ENCODE measurements at regions of chr6 and their contacts with region 1.

Region 1: GRCh38 chr6:15823838-15824414 is 161.1 kb upstream of the DTNBP1 start:
- DNase-seq: no peak
- ATAC-seq: no peak
- H3K4me3 ChIP-seq: no peak overlapping the region
- H3K27ac ChIP-seq: no peak overlapping the region
- H3K4me1 ChIP-seq: peaks cover 7 to 10% of the 10 kb centered on the region in 2 experiments; a peak in 3 of 5 replicates
- H3K27me3 ChIP-seq: peaks cover 0 to 5% of the 10 kb centered on the region in 2 experiments; a peak in 1 of 5 replicates
- CTCF ChIP-seq: no peak
- EP300 ChIP-seq: no peak
- POLR2A ChIP-seq: no peak
- RAD21 ChIP-seq: no peak

Region 2: DNA sequence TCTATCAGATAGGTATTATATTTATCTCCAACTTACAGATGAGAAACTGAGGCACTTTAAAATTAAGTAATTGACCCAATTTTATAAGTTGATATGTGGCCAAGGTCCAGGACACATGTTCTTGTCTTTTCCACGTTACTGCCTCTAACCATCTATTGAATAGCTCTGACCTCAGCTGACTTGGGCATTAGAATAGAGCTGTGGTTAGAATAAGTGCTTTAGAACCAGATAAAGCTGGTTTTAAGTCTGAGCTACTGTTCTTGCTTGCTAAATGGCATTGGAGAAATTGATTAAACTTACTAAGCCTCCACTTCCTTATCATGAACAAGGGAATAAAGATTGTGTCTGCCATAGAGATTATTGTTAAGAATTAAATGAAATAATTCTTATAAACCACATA is 13.3 kb before region 1 on chr6:
- CTCF ChIA-PET with region 1: no interaction called
- POLR2A ChIA-PET with region 1: interaction called, 10 read pairs
- in situ Hi-C with region 1: no loop called
- intact Hi-C with region 1: no loop called
- DNase-seq: no peak
- ATAC-seq: no peak
- H3K4me3 ChIP-seq: no peak overlapping the region
- H3K27ac ChIP-seq: no peak overlapping the region
- H3K4me1 ChIP-seq: peaks cover 0 to 3% of the 10 kb centered on the region in 2 experiments; a peak in 1 of 5 replicates
- H3K27me3 ChIP-seq: no peaks in the 10 kb centered on the region
- CTCF ChIP-seq: no peak
- EP300 ChIP-seq: no peak
- POLR2A ChIP-seq: no peak
- RAD21 ChIP-seq: no peak

Region 3: DNA sequence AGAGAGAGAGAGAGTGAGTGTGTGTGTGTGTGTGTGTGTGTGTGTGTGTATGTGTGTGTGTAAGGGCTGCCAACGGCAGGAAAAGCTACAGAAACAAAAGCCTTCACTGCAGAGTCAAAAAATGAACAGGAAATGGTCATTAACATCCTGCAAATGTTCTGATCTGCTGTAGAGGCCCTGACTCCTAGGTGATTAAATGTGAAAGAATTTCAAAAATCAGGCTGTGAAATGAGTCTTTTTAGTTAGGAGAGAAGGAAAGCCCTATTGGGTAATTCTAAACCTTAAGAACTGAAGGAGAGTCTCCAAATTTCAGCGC is 138.5 kb after region 1 on chr6:
- CTCF ChIA-PET with region 1: no interaction called
- POLR2A ChIA-PET with region 1: no interaction called
- in situ Hi-C with region 1: no loop called
- intact Hi-C with region 1: no loop called
- DNase-seq: no peak
- ATAC-seq: peak; percentile 19; the same call in 2 of the 3 replicates
- H3K4me3 ChIP-seq: no peak overlapping the region
- H3K27ac ChIP-seq: no peak overlapping the region
- H3K4me1 ChIP-seq: peaks cover 0 to 12% of the 10 kb centered on the region in 2 experiments; a peak in 3 of 5 replicates
- H3K27me3 ChIP-seq: no peaks in the 10 kb centered on the region
- CTCF ChIP-seq: no peak
- EP300 ChIP-seq: no peak
- POLR2A ChIP-seq: no peak
- RAD21 ChIP-seq: no peak

Region 4: DNA sequence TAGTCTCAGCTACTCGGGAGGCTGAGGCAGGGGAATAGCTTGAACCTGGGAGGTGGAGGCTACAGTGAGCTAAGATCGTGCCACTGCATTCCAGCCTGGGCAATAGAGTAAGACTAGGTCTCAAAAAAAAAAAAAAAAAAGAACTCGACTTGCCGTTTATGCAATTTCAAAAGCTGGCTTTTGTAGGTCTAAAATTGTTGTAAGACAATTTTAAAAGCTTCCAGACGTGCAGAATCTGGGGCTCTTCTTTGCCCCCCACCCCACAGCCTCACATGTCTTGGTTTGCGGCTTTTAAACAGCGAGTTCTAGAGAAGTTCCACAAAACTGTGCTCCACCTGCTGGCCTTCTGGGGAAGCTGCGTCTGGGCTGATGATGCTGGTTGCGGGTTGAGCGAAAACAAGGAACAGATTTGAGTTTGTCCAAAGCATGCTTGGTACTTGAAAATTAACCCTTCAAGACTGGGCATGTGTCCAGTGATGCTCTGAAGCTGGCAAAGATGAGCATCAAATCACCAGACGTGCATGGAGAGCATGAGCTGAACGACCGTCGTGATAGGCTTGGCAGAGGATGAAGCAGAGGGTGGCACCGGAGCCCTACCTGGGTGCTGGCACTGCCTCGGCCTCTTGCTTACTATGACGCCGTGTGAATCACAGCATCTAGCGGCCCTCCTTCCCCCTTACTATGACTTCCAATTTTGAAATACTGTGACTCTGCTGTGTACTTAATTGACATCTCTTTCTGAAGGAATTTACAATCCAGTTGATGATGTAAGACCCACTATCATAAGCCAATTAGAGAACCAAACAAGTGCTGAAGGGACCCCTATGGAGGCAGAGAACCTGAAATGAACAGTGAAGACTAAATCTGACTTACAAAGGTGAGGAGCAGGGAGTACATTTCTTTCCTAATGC is 585.9 kb after region 1 on chr6:
- CTCF ChIA-PET with region 1: no interaction called
- POLR2A ChIA-PET with region 1: no interaction called
- in situ Hi-C with region 1: no loop called
- intact Hi-C with region 1: no loop called
- DNase-seq: peak; percentile 53 to 77 (median 64)
- ATAC-seq: peak; percentile 96
- H3K4me3 ChIP-seq: no peak overlapping the region
- H3K27ac ChIP-seq: no peak overlapping the region
- H3K4me1 ChIP-seq: no peaks in the 10 kb centered on the region; a peak in 1 of 5 replicates
- H3K27me3 ChIP-seq: peaks cover 24 to 36% of the 10 kb centered on the region in 2 experiments; a peak in 4 of 5 replicates
- CTCF ChIP-seq: peak; percentile 86 to 93 (median 90)
- EP300 ChIP-seq: no peak
- POLR2A ChIP-seq: no peak
- RAD21 ChIP-seq: peak; percentile 80 to 87